ENCODE measurements at regions of chr15 and their contacts with region 1.

Region 1: GRCh38 chr15:77419836-77420609 is at the start of gene PEAK1:
- DNase-seq: peak; percentile 100
- ATAC-seq: peak; percentile 96 to 99 (median 98)
- H3K4me3 ChIP-seq: peak within 1 kb of the TSS; percentile 73 to 97 (median 90)
- H3K27ac ChIP-seq: peak within 1 kb of the TSS; percentile 92 to 98 (median 96)
- H3K4me1 ChIP-seq: peaks cover 4 to 76% (median 66%) of the 10 kb centered on the region in 9 donors
- H3K27me3 ChIP-seq: no peaks in the 10 kb centered on the region
- CTCF ChIP-seq: no peak
- total RNA-seq, gene PEAK1: 68.1 to 146 (median 96.4) TPM

Region 2: GRCh38 chr15:77126529-77127326 is 293.3 kb before region 1 on chr15:
- intact Hi-C with region 1: loop called in 1 of 10 experiments (anchors 10 kb)
- DNase-seq: no peak
- ATAC-seq: peak; percentile 42 to 84 (median 73)
- H3K4me3 ChIP-seq: no peak overlapping the region
- H3K27ac ChIP-seq: peak overlapping the region in 5 of 10 donors; percentile 11 to 58 (median 43)
- H3K4me1 ChIP-seq: peaks cover 0 to 46% (median 26%) of the 10 kb centered on the region in 9 donors
- H3K27me3 ChIP-seq: no peaks in the 10 kb centered on the region
- CTCF ChIP-seq: no peak

Region 3: DNA sequence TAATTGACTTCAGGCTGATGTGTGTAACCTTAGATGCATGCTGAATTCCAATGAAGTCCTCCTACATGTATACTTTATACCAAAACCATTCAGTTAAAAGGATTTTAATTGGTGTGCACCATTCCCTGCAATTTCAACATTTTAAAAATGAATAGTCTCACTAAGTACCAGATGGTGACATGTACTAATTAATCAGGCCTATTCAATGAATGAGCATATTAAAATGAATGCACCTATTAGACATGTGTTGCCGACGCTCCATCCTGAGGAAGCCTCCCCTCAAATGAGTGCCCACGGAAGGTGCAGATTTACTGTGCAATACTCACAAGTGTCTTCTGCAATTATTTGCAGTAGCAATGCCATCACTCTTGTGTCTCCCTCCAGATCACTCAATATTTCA is 224.4 kb before region 1 on chr15:
- intact Hi-C with region 1: loop called in 1 of 10 experiments (anchors 10 kb)
- DNase-seq: no peak
- ATAC-seq: no peak
- H3K4me3 ChIP-seq: no peak overlapping the region
- H3K27ac ChIP-seq: no peak overlapping the region
- H3K4me1 ChIP-seq: peaks cover 0 to 18% (median 6%) of the 10 kb centered on the region in 9 donors
- H3K27me3 ChIP-seq: no peaks in the 10 kb centered on the region
- CTCF ChIP-seq: no peak

Region 4: DNA sequence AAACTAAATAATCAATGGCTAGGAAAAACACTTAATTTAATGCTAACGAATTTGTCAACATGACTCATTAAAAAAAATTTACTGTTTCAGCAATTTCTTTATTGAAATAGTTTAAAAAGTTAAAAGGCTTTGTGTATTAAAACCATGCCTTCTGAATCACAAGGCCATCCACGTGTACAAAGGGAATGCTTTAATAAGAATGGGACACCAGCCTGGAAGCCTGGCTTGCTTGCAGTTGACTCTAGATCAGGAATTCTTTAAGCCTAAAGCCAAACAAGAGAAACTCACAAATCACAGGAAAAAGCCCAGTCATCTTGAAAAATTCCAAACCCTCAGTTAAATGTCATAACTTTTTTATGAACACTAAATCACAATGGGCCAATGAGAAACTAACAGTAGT is 137.7 kb before region 1 on chr15:
- intact Hi-C with region 1: loop called in 1 of 10 experiments (anchors 10 kb)
- DNase-seq: peak in 1 of 2 donors; percentile 21
- ATAC-seq: peak in 6 of 8 donors; percentile 47 to 71 (median 58)
- H3K4me3 ChIP-seq: no peak overlapping the region
- H3K27ac ChIP-seq: peak overlapping the region in 2 of 10 donors; percentile 1 to 43
- H3K4me1 ChIP-seq: peaks cover 0 to 18% (median 12%) of the 10 kb centered on the region in 9 donors
- H3K27me3 ChIP-seq: no peaks in the 10 kb centered on the region
- CTCF ChIP-seq: no peak

Region 5: DNA sequence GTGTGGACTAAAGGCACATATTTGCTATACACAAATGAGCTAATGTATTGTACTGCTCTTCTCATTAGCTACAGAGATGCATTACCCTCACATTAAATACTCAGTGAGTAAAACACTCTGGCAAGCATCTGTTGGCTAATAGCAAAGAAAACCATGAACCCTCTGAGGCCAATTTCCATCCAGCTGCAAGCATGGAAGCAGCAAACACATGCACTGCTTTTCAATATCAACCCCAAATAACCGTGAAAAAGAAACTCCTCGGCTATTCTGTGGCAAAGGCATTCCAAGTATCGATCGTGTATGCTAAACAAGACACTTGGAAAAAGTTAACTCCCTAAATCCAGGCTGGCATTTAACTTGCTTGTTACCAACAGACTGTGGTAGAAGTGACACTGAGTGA is 67.1 kb before region 1 on chr15:
- intact Hi-C with region 1: loop called in 2 of 10 experiments (anchors 5 kb)
- DNase-seq: no peak
- ATAC-seq: no peak
- H3K4me3 ChIP-seq: no peak overlapping the region
- H3K27ac ChIP-seq: peak overlapping the region in 1 of 10 donors; percentile 27
- H3K4me1 ChIP-seq: peaks cover 2 to 65% (median 35%) of the 10 kb centered on the region in 9 donors
- H3K27me3 ChIP-seq: no peaks in the 10 kb centered on the region
- CTCF ChIP-seq: no peak

Region 6: GRCh38 chr15:77496710-77497103 is 76.7 kb after region 1 on chr15:
- intact Hi-C with region 1: loop called in 8 of 10 experiments (anchors 1 to 10 kb)
- DNase-seq: peak; percentile 89
- ATAC-seq: peak; percentile 79 to 92 (median 85)
- H3K4me3 ChIP-seq: peak overlapping the region in 7 of 10 donors; percentile 14 to 34 (median 31)
- H3K27ac ChIP-seq: peak overlapping the region; percentile 80 to 96 (median 92)
- H3K4me1 ChIP-seq: peaks cover 34 to 97% (median 71%) of the 10 kb centered on the region in 9 donors
- H3K27me3 ChIP-seq: no peaks in the 10 kb centered on the region
- CTCF ChIP-seq: peak; percentile 94 to 98 (median 97)

Region 7: DNA sequence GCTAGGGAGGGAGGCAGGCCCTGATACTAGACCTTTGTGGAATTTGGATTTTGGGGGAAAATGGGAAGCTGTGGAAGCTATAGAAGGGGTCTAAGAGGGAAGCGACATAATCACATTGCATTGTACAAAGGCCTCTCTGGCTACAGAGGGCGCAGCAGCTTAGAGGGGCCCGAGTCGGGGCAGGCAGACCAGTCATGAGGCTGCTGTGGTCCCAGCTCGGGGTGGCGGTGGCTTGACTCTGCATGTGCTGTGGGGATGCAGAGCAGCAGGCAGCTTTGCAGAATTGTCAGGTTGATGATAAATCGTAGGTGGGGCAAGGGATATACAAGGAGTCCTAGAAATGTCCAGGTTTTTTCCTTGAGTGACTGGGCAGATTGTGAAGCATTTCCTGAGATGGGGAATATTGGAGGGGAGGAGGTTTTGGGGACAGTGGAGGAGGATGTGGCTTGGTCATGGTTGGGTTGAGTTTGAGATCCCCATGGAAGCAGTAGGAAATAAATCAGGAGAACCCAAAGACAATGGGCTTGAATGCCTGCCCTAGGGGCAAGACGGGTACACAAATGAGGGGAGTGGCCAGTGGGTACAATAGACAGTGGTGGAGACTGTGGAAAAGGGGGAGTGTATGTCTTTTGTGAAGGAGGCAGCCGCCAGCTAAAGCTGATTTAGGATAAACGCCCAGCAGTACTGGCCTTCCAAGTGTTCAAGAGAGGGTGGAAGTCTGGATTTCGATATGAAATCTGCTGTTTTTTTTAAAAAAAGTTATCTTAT is 94.8 kb after region 1 on chr15:
- intact Hi-C with region 1: no loop called
- DNase-seq: no peak
- ATAC-seq: no peak
- H3K4me3 ChIP-seq: no peak overlapping the region
- H3K27ac ChIP-seq: no peak overlapping the region
- H3K4me1 ChIP-seq: peaks cover 7 to 25% (median 18%) of the 10 kb centered on the region in 9 donors
- H3K27me3 ChIP-seq: no peaks in the 10 kb centered on the region
- CTCF ChIP-seq: no peak